ENCODE measurements at regions of chr3 and their contacts with region 1.

Region 1: GRCh38 chr3:8990266-8991215 is 27.3 kb upstream of the RAD18 start:
- DNase-seq: no peak
- ATAC-seq: no peak

Region 2: DNA sequence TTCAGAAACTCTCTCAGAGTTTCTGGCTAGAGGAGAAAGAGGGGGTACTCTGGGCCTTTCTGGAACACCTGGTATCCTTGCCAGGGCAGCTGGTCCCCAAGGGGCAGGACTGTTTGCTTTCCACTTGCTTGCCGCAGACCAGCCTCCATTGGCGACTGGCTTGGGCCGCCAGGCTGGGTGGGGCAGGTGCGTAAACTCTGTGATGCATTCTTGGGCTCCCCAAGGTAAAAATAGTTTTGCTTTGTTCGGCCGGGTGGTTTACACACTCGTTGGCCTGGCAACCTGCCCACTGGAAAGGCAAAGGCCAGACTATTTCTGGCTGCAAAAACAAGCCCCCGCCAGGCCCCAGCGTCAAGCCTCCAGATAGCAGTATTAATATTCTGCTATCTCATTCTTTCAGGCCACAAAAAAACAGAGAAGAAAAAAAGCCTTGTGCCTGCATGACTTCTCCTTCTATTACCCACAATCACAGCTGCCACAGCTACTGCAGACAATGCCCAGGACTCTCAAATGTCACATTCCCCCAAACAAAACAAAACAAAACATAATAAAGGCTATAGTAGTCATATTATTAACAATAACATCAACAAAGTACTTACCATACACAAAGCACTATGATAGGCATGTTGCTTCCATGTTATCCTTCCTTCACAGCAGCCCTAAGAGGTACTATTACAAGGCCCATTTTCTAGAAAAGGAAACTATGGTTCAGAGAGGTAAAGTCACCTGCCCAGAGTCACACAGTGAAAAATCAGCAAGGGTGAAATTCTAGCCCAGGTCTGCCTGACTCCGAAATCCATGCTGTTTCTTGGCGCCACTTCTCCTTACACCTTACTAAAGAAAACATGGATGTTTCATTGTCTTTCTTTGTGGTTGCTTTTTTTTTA is 332.0 kb before region 1 on chr3:
- intact Hi-C with region 1: no loop called
- DNase-seq: peak; percentile 90
- ATAC-seq: peak; percentile 94

Region 3: GRCh38 chr3:9019259-9019961 is 28.9 kb after region 1 on chr3:
- intact Hi-C with region 1: loop called (anchors 2 kb)
- DNase-seq: no peak
- ATAC-seq: no peak

Region 4: DNA sequence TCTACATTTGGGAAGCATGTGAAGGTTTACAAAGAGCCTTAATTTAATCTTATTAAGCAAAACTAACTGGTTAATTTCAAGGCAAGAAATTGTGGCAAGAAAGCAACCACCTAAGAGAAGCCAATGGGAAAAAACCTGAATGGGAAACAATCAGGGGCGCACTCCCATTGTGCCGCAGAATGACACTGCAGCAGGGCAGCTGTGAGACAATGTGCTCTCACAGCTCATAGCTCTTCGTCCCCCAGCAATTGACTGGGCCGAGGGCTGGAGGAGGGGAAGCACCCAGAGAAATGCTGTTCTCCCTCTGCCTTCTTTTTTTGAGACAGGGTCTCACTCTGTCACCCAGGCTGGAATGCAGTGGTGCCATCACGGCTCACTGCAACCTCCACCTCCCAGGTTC is 66.0 kb after region 1 on chr3:
- intact Hi-C with region 1: loop called (anchors 5 kb)
- DNase-seq: no peak
- ATAC-seq: no peak

Measured in sciatic nerve (tissue), 2 donors.